ENCODE measurements at regions of chr7 and their contacts with region 1.

Region 1: GRCh38 chr7:135801045-135801693 is 52.6 kb upstream of the FAM180A start:
- H3K4me3 Mint-ChIP-seq: no peak overlapping the region
- H3K27ac Mint-ChIP-seq: no peak overlapping the region
- H3K4me1 Mint-ChIP-seq: peaks cover 5% of the 10 kb centered on the region
- H3K27me3 Mint-ChIP-seq: peaks cover 13% of the 10 kb centered on the region

Region 2: GRCh38 chr7:134690016-134690415 is 1111.2 kb before region 1 on chr7:
- intact Hi-C with region 1: no loop called
- H3K4me3 Mint-ChIP-seq: no peak overlapping the region
- H3K27ac Mint-ChIP-seq: no peak overlapping the region
- H3K4me1 Mint-ChIP-seq: peaks cover 45% of the 10 kb centered on the region
- H3K27me3 Mint-ChIP-seq: peaks cover 15% of the 10 kb centered on the region

Region 3: GRCh38 chr7:135716677-135717238 is 84.4 kb before region 1 on chr7:
- intact Hi-C with region 1: no loop called
- H3K4me3 Mint-ChIP-seq: no peak overlapping the region
- H3K27ac Mint-ChIP-seq: no peak overlapping the region
- H3K4me1 Mint-ChIP-seq: peaks cover 5% of the 10 kb centered on the region
- H3K27me3 Mint-ChIP-seq: peaks cover 2% of the 10 kb centered on the region

Region 4: DNA sequence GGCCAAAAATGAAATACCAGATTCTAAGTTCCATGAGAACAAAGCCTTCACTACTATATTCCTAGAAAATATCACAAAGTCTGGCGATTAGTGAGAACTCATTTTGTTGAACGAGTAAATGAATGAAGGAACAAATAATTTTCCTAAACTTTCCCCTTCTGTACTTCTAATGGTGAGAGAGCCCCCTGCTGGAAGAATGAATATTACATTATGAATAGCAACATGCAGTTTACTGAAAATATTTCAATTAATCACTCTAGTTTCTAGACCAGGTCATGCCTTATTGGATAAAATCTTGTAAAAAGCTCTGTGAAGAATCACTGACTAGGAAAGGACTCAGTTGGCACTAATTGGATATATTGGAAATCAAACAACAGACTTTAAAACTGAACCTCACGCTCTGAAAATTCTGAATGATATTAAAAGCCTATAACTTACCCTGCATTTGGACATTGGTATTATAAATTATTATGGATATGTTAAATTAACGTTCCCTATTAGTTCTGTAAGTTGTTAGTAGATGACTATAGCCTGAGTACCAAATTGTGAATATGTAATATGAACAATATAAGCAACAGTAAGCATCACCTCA is 208.4 kb after region 1 on chr7:
- intact Hi-C with region 1: loop called (anchors 1 kb)
- H3K4me3 Mint-ChIP-seq: no peak overlapping the region
- H3K27ac Mint-ChIP-seq: no peak overlapping the region
- H3K4me1 Mint-ChIP-seq: peaks cover 5% of the 10 kb centered on the region
- H3K27me3 Mint-ChIP-seq: peaks cover 12% of the 10 kb centered on the region